RWPE1 (cell line): ENCODE measurements at regions of chr11 and their contacts with region 1.

Region 1: DNA sequence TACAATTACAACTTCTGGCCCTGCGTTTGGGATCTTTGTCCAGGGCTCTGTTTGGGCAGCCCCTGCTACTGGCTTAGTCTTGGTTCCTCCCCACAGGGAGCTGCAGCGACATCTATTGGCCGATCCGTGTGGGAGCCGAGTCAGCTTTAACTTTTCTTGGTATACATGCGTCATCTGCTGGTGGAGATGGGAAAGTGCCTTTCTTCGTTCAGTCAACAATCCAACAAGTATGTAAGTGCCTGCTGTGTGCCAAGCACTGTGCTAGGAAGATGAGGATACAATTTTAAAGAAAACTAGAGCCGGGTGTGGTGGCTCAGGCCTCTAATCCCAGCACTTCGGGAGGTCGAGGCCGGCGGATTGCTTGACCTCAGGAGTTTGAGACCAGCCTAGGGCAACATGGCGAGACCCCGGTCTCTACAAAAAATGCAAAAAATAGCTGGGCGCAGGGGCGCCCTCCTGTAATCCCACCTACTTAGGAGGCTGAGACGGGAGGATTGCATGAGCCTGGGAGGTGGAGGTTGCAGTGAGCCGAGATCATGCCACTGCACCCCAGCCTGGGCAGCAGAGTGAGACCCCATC is 8.2 kb downstream of the TPBGL start:
- DNase-seq: peak; percentile 80
- H3K27ac ChIP-seq: no peak overlapping the region
- CTCF ChIP-seq: peak; percentile 98

Region 2: DNA sequence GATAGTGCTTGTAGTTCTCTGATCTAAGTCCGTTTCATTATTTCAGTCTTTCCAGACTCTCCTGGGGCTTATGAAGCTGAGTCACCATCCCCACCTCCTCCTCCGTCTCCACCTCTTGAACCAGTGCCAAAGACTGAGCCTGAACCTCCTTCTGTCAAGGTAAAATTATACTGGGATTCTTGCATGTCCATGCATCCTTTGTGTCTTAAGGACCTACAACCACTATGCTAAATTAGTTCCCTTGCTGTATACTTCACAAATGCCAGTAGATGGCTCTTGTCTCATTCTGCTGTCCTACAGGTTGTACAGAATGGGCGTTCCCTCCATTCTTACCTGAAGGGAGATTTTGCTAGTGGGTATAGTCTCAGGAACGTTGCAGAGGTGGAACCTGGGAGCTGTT is 614.2 kb before region 1 on chr11:
- CTCF ChIA-PET with region 1: no interaction called
- POLR2A ChIA-PET with region 1: no interaction called
- DNase-seq: peak; percentile 87
- H3K27ac ChIP-seq: no peak overlapping the region
- CTCF ChIP-seq: peak; percentile 24; the same call in 1 of the 2 replicates

Region 3: DNA sequence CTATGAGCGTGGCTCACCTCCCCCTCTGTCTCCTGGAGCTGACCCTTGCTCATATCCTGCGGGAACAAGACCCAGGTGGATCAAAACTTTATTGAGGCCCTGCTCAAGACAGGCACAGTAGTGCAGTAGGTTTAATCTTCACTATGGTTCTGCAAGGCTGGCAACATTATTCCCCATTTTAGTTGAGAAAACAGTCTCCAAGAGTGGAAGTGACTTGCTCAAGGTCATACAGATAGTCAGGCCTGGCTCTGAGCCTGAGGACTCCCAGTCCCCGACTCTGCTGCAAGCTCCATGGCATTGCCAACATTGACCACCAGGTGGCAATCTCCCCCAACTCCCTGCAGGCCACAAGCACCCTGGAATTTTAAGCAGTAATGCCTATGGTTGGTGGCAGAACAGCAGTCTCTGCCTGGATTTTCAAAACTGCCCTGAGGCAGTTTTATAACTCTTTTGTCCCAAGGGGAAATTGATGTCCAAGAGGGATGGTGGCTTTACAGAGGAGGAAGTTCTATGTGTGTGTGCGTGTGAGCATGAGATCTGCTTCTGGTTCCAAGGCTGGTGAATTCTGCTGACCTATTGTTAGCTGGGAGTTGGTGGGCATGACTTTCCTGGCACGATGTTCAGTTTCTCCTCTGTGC is 225.9 kb before region 1 on chr11:
- CTCF ChIA-PET with region 1: interaction called, 48 read pairs
- POLR2A ChIA-PET with region 1: no interaction called
- DNase-seq: peak; percentile 76
- H3K27ac ChIP-seq: no peak overlapping the region
- CTCF ChIP-seq: peak; percentile 93

Region 4: GRCh38 chr11:75174781-75175370 is 73.9 kb before region 1 on chr11:
- CTCF ChIA-PET with region 1: no interaction called
- POLR2A ChIA-PET with region 1: no interaction called
- DNase-seq: no peak
- H3K27ac ChIP-seq: no peak overlapping the region
- CTCF ChIP-seq: no peak

Region 5: DNA sequence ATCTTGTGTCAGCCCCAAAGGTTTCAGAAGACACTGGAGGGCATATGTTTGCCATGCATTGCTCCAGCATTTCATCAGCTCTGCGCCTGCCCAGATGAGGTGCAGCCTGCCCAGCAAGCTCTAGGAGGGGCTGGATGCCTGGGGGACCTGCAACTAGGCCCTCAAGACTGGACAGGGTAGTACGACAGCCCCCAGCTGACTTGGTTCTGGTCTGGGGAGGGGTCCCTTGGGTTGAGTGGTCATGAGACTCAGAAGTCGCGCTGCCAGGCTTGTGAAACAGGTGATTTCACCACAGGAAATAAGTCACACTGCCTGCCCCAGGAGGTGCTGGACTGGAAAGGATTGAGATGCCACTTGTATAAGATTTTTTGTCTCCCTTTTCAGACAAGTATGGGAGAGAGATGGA is 15.2 kb after region 1 on chr11:
- CTCF ChIA-PET with region 1: interaction called, 10 read pairs
- POLR2A ChIA-PET with region 1: no interaction called
- DNase-seq: no peak
- H3K27ac ChIP-seq: no peak overlapping the region
- CTCF ChIP-seq: no peak